ENCODE measurements at regions of chr17 and their contacts with region 1.

Region 1: GRCh38 chr17:77444984-77445759 is 304.4 kb downstream of the SEC14L1 start:
- DNase-seq: peak; percentile 93
- ATAC-seq: peak; percentile 50
- H3K4me3 Mint-ChIP-seq: peak overlapping the region; percentile 77
- H3K27ac Mint-ChIP-seq: peak overlapping the region; percentile 94
- H3K4me1 Mint-ChIP-seq: peaks cover 91% of the 10 kb centered on the region
- H3K27me3 Mint-ChIP-seq: no peaks in the 10 kb centered on the region
- CTCF ChIP-seq: no peak

Region 2: GRCh38 chr17:77285520-77286390 is 159.4 kb before region 1 on chr17:
- CTCF ChIA-PET with region 1: no interaction called
- POLR2A ChIA-PET with region 1: no interaction called
- intact Hi-C with region 1: no loop called
- DNase-seq: no peak
- ATAC-seq: no peak
- H3K4me3 Mint-ChIP-seq: no peak overlapping the region
- H3K27ac Mint-ChIP-seq: no peak overlapping the region
- H3K4me1 Mint-ChIP-seq: peaks cover 10% of the 10 kb centered on the region
- H3K27me3 Mint-ChIP-seq: peaks cover 13% of the 10 kb centered on the region
- CTCF ChIP-seq: no peak

Region 3: DNA sequence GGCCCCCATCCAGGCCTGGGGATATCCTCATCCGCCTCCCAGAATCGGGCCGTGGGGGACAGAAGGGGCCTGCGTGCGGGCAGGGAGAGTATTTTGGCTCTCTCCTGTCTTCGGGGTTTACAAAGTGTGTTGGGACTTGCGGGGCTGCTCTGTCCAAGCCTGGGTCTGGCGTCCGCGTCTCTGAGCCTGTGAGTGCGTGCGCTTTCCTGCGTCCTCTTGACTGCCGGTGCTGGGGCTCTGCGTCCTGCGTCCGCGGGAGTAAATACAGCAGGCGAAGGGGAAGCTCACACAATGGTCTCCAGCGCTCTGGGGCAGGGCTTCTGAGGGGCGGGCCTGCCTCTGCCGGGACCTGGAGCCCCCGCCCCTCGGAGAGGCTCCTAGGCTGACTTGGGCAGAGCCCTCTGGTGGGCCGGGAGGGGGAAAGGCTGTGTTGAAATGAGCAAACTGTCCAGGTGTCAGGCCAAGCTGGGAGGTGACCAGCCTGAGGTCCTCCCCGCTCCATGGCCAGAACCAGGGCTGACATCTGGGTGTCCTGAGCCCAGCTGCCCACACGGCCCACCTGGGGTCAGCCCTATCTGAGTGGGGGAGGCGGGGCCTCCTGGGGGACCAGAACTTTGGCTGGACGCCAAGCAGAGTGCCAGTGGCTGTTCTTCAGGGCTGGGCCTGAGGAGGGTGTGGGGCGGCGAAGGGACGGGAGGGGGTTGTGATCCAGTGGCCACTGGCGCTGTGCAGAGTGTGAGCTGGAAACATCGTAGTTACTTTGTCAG is 70.8 kb before region 1 on chr17:
- CTCF ChIA-PET with region 1: interaction called, 5 read pairs
- POLR2A ChIA-PET with region 1: interaction called, 11 read pairs
- intact Hi-C with region 1: no loop called
- DNase-seq: peak; percentile 89
- ATAC-seq: peak; percentile 78
- H3K4me3 Mint-ChIP-seq: peak overlapping the region; percentile 92
- H3K27ac Mint-ChIP-seq: peak overlapping the region; percentile 91
- H3K4me1 Mint-ChIP-seq: peaks cover 56% of the 10 kb centered on the region
- H3K27me3 Mint-ChIP-seq: no peaks in the 10 kb centered on the region
- CTCF ChIP-seq: peak; percentile 31

Region 4: DNA sequence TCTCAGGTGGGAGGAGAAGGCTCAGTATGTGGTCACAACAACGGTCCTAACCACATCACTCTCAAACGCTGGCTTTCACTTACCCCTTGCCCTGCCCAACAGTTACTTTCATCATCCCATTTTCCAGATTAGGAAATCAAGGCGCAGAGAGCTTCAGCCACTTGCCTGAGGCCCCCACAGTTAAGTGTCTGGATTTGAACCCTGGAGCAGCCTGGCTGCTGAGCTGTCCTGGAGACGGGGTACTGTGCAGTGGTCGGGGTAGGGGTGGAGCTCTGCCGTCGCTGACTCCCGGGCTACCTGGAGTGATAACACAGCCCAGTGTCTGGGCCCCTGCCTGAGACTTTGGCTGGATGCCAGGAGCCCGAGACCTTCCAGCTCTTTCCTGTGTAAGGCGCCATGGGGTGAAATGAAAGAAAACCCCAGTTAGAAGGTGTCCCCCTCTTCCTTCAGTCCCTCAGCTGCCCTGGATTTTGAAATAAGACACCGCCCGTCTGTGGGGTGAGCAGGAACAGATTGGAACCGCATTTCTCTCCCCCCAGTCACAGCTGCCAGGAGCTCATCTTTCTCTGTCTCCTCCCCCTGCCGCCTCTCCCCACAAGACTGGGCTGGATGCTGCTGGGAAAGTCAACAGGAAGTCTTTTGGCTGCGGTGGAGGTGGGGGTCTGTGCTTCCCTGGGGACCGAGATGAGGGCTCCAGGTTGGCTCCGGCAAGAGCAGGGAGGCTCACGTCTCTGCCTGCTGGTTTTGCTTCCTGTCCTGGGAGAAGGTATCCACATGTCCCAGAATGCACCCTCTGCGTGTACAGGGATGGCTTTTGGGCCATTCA is 24.2 kb before region 1 on chr17:
- CTCF ChIA-PET with region 1: interaction called, 9 read pairs
- POLR2A ChIA-PET with region 1: interaction called, 18 read pairs
- intact Hi-C with region 1: no loop called
- DNase-seq: peak; percentile 58
- ATAC-seq: peak; percentile 64
- H3K4me3 Mint-ChIP-seq: peak overlapping the region; percentile 50
- H3K27ac Mint-ChIP-seq: peak overlapping the region; percentile 78
- H3K4me1 Mint-ChIP-seq: peaks cover 54% of the 10 kb centered on the region
- H3K27me3 Mint-ChIP-seq: no peaks in the 10 kb centered on the region
- CTCF ChIP-seq: no peak

Region 5: GRCh38 chr17:77471984-77472461 is 26.9 kb after region 1 on chr17:
- CTCF ChIA-PET with region 1: interaction called, 14 read pairs
- POLR2A ChIA-PET with region 1: interaction called, 87 read pairs
- intact Hi-C with region 1: no loop called
- DNase-seq: peak; percentile 26
- ATAC-seq: no peak
- H3K4me3 Mint-ChIP-seq: peak overlapping the region; percentile 69
- H3K27ac Mint-ChIP-seq: peak overlapping the region; percentile 87
- H3K4me1 Mint-ChIP-seq: peaks cover 94% of the 10 kb centered on the region
- H3K27me3 Mint-ChIP-seq: no peaks in the 10 kb centered on the region
- CTCF ChIP-seq: no peak

Region 6: GRCh38 chr17:77494664-77495435 is 49.7 kb after region 1 on chr17:
- CTCF ChIA-PET with region 1: interaction called, 10 read pairs
- POLR2A ChIA-PET with region 1: interaction called, 4 read pairs
- intact Hi-C with region 1: no loop called
- DNase-seq: peak; percentile 81
- ATAC-seq: peak; percentile 76
- H3K4me3 Mint-ChIP-seq: no peak overlapping the region
- H3K27ac Mint-ChIP-seq: peak overlapping the region; percentile 44
- H3K4me1 Mint-ChIP-seq: peaks cover 27% of the 10 kb centered on the region
- H3K27me3 Mint-ChIP-seq: no peaks in the 10 kb centered on the region
- CTCF ChIP-seq: peak; percentile 100

Measured in activated CD8-positive, alpha-beta T cell treated with anti-CD3 and anti-CD28 coated beads for 36 hours (primary cell).